Posterior cingulate gyrus (tissue), 11 donors: ENCODE measurements at regions of chr1 and their contacts with region 1.

Region 1: GRCh38 chr1:114581335-114582287 is at the start of gene BCAS2:
- DNase-seq: peak; percentile 92 to 99 (median 96)

Region 2: DNA sequence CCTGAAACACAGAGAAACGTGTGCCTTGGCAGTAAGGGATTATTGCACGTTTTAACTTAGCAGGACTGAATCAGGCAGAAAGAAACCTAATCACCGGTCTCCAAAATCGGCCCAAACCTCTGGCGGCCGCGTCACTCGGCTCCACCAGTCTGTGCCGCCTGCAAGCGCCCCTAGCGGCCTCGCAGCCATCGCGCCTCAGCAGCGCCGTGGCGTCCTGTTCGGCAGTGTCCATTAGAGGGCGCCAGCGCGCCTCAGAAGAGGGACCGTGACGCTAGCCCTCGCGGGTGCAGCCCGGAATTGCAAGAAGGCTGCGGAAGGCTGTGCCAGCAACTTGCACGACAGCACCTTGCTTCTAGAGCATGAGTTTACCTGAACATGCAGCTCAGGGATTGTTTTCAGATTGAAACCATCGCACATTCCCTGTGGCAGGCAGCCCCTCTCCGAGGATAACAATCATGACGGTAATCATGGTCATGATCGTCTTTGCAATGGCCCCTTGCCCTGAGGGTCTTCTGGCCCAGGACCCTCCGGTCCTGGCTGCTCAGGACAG is 235.1 kb before region 1 on chr1:
- intact Hi-C with region 1: loop called (anchors 10 kb)
- DNase-seq: peak; percentile 87 to 99 (median 96)

Region 3: GRCh38 chr1:114482204-114482980 is 99.2 kb before region 1 on chr1:
- intact Hi-C with region 1: no loop called
- DNase-seq: no peak

Region 4: DNA sequence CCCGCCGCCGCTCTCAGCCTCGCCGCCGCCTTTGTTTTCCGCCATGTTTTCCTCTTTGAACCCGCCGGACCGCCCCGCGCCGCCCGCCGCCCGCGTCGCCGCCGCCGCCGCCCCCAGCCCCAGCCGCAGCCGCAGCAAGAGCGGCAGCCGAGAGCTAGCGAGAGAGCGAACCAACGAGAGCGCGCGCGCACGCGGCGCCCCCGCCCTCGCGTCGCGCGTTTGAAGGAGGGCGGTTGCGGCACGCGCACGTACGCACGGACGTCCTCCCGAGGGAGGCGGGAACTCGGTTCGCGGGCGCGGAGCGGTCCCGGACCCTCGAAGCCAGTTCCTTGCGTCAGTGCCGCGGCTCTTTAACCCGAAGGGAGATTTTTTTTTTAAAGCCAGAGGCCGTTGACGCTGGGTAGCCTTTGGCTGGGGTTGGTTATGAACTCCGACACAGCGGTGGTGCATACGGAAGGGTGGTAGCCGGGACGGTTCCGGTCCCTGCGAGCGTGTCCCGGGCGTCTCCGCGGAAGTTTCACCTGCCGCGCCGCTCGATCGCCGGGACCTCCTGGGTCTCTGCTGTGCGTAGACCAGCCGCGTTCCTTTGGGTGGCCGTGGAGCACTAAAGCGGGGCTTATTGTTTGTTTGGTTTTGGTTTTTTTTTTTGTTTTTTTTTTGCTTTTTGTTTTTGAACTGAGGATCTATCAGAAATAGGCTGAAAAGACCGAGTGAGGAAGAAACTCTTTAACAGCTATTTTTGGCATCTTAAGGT is 70.4 kb before region 1 on chr1 and contains the start of gene TRIM33:
- intact Hi-C with region 1: loop called (anchors 1 kb)
- DNase-seq: peak; percentile 83 to 99 (median 90)

Region 5: DNA sequence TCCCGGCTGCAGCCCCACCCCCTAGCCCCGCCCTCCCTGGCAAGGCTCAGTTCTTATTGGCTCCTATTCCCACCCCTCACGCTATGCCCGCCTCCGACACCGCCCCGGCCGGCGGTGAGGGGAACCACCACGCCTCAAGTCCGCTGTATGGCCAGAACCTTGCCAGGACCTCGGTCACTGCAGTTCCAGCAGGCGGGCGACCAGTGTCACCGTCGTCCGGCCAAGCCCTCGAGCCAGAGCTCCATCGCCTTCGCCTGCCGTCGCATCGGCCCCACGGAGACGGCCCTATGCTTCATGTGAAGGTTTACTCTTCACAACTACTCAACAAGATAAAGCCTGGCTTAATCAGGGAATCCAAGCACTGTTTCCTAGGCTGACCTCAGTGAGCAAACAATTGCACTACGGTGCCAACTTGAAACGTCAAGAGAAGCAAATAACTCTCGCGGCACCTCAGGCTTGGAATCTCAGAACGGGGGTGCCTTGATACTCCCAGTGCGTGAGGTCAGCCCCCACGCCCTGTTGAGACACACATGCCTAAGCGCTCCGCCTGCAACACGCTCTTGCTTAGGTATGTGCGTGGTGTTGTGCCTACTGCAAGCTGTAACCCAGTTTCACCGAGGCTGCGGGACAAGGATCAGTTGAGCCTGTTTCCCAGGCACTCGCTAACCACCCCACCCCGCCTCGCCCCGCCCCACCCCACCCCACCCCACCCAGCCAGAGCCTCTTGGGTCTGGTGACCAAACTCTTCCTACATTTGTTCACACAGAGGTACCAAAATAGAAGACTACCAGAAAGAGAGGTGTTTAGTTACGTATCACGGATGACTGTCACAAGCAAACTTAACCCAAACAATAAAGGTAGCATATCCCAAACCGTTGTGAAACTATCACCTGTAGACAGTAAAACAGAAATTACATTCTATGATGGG is 88.7 kb after region 1 on chr1:
- intact Hi-C with region 1: loop called (anchors 10 kb)
- DNase-seq: peak; percentile 44 to 96 (median 81)

Region 6: GRCh38 chr1:114716304-114717170 is 134.9 kb after region 1 on chr1 and contains the start of gene NRAS:
- intact Hi-C with region 1: loop called (anchors 1 kb)
- DNase-seq: peak; percentile 87 to 99 (median 94)